ENCODE measurements at regions of chr20 and their contacts with region 1.

Region 1: GRCh38 chr20:23094927-23095326 is 8.8 kb upstream of the CD93 start:
- DNase-seq: peak; percentile 92
- H3K4me3 Mint-ChIP-seq: peak overlapping the region; percentile 53
- H3K27ac Mint-ChIP-seq: peak overlapping the region; percentile 84
- H3K4me1 Mint-ChIP-seq: peaks cover 38% of the 10 kb centered on the region
- H3K27me3 Mint-ChIP-seq: no peaks in the 10 kb centered on the region
- CTCF ChIP-seq: no peak

Region 2: DNA sequence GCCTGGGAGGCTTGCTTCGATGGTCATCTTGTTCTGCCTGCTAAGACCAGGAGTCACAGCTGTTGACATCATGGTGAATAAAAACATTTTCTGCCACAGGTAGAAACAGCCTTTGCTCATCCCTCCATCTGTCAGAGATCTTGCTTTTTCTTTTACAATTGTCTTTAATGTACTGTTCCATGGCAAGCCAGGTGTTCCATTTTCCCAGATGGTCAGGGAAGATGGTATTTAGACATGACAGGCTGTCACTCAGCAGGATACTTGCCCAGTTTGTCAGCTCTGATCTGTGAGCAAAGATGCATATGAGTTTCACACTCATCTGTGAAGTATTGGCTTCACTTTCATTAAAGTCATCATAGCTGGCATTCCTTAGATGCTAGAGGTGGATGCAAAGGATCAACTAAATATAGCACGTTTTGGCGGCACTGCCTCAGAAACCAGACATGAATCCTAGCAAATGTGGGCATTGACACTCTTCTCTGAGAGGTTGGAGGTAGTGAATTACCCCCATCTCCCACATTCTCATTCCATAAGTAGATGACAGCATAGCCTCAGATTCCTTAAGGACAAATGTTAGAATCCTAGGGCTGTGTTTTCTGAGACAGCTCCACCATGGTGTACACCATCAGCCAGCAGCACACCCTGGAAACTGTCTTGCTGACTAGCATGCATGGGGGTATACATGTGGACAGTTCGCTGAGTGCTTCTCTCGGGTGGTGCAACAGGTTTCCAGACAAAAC is 55.6 kb before region 1 on chr20:
- CTCF ChIA-PET with region 1: no interaction called
- POLR2A ChIA-PET with region 1: no interaction called
- intact Hi-C with region 1: no loop called
- DNase-seq: no peak
- H3K4me3 Mint-ChIP-seq: no peak overlapping the region
- H3K27ac Mint-ChIP-seq: no peak overlapping the region
- H3K4me1 Mint-ChIP-seq: peaks cover 19% of the 10 kb centered on the region
- H3K27me3 Mint-ChIP-seq: no peaks in the 10 kb centered on the region
- CTCF ChIP-seq: no peak

Region 3: GRCh38 chr20:23079016-23079351 is 15.9 kb before region 1 on chr20:
- CTCF ChIA-PET with region 1: interaction called, 16 read pairs
- POLR2A ChIA-PET with region 1: interaction called, 5 read pairs
- intact Hi-C with region 1: no loop called
- DNase-seq: no peak
- H3K4me3 Mint-ChIP-seq: no peak overlapping the region
- H3K27ac Mint-ChIP-seq: no peak overlapping the region
- H3K4me1 Mint-ChIP-seq: peaks cover 18% of the 10 kb centered on the region
- H3K27me3 Mint-ChIP-seq: no peaks in the 10 kb centered on the region
- CTCF ChIP-seq: no peak

Region 4: DNA sequence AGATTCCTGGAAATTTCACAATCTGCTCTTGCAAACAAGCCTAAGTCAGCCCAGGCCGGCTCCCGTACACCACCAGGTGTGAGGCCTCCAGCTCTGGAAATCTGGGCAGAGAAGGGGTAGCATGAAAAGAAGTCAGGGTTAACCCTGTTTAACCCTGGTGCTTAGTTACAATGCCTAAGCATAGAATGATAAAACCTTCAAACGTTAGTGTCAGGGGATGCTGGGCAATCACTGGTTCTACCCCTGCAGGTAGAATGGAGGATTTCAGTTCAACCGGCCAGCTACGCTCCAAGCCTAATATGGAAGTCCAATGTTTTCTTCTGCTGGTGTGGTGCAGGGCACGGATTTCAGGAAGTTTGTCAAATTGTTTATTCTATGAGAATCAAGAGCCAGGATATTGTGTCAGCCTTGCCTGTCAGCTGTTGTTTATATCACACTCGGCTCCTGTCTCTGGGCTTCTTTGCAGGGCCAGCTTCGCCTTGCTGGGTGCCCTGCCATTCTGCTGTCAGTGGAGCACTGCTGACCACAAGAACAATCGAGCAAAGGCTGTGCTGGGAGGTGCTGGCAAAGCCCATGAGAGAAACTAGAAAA is 11.4 kb after region 1 on chr20:
- CTCF ChIA-PET with region 1: interaction called, 14 read pairs
- POLR2A ChIA-PET with region 1: interaction called, 10 read pairs
- intact Hi-C with region 1: no loop called
- DNase-seq: no peak
- H3K4me3 Mint-ChIP-seq: no peak overlapping the region
- H3K27ac Mint-ChIP-seq: no peak overlapping the region
- H3K4me1 Mint-ChIP-seq: peaks cover 8% of the 10 kb centered on the region
- H3K27me3 Mint-ChIP-seq: no peaks in the 10 kb centered on the region
- CTCF ChIP-seq: no peak

Region 5: GRCh38 chr20:23156170-23156841 is 61.4 kb after region 1 on chr20:
- CTCF ChIA-PET with region 1: interaction called, 4 read pairs
- POLR2A ChIA-PET with region 1: interaction called, 58 read pairs
- intact Hi-C with region 1: no loop called
- DNase-seq: peak; percentile 93
- H3K4me3 Mint-ChIP-seq: no peak overlapping the region
- H3K27ac Mint-ChIP-seq: peak overlapping the region; percentile 99
- H3K4me1 Mint-ChIP-seq: peaks cover 70% of the 10 kb centered on the region
- H3K27me3 Mint-ChIP-seq: no peaks in the 10 kb centered on the region
- CTCF ChIP-seq: no peak